Activated CD8-positive, alpha-beta T cell treated with anti-CD3 and anti-CD28 coated beads for 36 hours (primary cell): ENCODE measurements at regions of chr3 and their contacts with region 1.

Region 1: GRCh38 chr3:49104483-49105291 is at the start of gene QARS1:
- DNase-seq: peak; percentile 96
- ATAC-seq: peak; percentile 99
- H3K4me3 Mint-ChIP-seq: peak within 1 kb of the TSS; percentile 99
- H3K27ac Mint-ChIP-seq: peak within 1 kb of the TSS; percentile 96
- H3K4me1 Mint-ChIP-seq: peaks cover 21% of the 10 kb centered on the region
- H3K27me3 Mint-ChIP-seq: no peaks in the 10 kb centered on the region
- CTCF ChIP-seq: no peak
- total RNA-seq, gene QARS1: 270 to 282 TPM

Region 2: DNA sequence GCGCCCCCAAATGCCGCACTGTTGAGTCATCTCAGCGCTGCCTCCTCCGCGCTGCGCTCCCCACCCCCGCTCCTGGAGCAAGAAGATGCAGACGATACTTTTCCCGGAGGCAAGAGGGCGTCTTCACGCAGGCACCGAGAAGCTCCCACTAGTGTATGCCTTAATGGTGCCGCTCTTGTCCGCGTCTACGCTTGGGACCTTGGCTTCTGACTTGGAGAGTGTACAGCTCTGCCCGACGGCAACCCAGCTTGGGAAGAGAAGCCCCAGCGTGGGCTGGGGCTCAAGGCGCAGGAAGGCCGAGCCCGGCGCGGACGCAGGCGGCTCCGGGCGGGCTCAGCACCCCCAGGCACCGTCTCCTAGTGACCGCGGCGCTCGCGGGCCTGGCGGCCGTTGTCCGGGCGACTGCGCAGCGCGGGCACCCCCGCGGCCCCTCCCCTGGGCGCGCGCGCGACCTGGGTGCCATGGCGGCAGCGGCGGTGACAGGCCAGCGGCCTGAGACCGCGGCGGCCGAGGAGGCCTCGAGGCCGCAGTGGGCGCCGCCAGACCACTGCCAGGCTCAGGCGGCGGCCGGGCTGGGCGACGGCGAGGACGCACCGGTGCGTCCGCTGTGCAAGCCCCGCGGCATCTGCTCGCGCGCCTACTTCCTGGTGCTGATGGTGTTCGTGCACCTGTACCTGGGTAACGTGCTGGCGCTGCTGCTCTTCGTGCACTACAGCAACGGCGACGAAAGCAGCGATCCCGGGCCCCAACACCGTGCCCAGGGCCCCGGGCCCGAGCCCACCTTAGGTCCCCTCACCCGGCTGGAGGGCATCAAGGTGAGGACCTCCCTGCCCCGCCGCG is 114.7 kb before region 1 on chr3 and contains the start of gene P4HTM:
- CTCF ChIA-PET with region 1: no interaction called
- POLR2A ChIA-PET with region 1: no interaction called
- intact Hi-C with region 1: no loop called
- DNase-seq: peak; percentile 92
- ATAC-seq: peak; percentile 84
- H3K4me3 Mint-ChIP-seq: peak within 1 kb of the TSS; percentile 92
- H3K27ac Mint-ChIP-seq: peak within 1 kb of the TSS; percentile 95
- H3K4me1 Mint-ChIP-seq: peaks cover 41% of the 10 kb centered on the region
- H3K27me3 Mint-ChIP-seq: no peaks in the 10 kb centered on the region
- CTCF ChIP-seq: peak; percentile 11
- total RNA-seq, gene P4HTM: 24.8 to 25.0 TPM

Region 3: DNA sequence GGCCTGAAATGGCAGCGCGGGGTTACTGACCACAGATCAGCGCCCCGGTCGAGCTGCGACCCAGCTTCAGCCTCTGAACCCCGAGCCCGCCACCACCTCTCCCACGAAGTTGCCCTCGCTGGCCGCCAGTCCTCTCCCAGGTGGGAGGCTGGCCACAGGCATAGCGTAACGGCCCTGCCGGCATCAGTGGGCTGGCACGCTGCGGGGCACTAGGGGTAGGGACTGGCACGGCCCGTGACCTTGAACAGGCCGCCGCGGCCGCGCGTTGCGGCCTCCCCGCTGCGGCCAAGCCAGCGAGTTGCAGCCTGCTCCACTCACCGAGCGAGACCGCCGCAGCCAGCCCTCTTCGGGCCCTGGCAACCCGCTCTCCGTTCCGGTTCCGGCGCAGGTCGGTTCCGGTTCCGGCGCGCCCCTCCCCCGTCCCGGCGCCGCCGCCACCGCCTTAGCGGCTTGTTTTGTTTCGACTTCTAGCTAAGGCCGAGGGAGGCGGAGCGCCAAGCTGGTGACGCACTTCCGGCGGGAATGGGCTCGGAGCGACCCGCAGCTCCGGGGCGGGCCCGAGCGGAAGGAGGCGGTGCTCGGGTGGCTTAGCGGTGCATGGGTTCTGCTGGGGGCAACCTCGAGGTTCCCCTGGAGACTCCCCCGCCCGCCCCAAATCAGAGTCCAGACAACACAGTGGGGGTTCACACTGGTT is 15.9 kb after region 1 on chr3 and contains the start of gene USP19:
- CTCF ChIA-PET with region 1: interaction called, 3 read pairs
- POLR2A ChIA-PET with region 1: interaction called, 13 read pairs
- intact Hi-C with region 1: no loop called
- DNase-seq: peak; percentile 96
- ATAC-seq: peak; percentile 96
- H3K4me3 Mint-ChIP-seq: peak within 1 kb of the TSS; percentile 87
- H3K27ac Mint-ChIP-seq: peak within 1 kb of the TSS; percentile 93
- H3K4me1 Mint-ChIP-seq: peaks cover 20% of the 10 kb centered on the region
- H3K27me3 Mint-ChIP-seq: no peaks in the 10 kb centered on the region
- CTCF ChIP-seq: no peak
- total RNA-seq, gene USP19: 41.0 to 41.6 TPM